ENCODE measurements at regions of chr5 and their contacts with region 1.

Region 1: GRCh38 chr5:43729846-43730478 is 127.0 kb downstream of the NNT start:
- DNase-seq: peak in 1 of 2 donors; percentile 56
- H3K4me3 ChIP-seq: no peak overlapping the region
- H3K27ac ChIP-seq: no peak overlapping the region
- H3K4me1 ChIP-seq: peaks cover 0 to 9% (median 4%) of the 10 kb centered on the region in 4 donors
- H3K27me3 ChIP-seq: no peaks in the 10 kb centered on the region
- CTCF ChIP-seq: peak in 5 of 7 experiments; percentile 26 to 61 (median 53)
- EP300 ChIP-seq: no peak
- POLR2A ChIP-seq: no peak

Region 2: DNA sequence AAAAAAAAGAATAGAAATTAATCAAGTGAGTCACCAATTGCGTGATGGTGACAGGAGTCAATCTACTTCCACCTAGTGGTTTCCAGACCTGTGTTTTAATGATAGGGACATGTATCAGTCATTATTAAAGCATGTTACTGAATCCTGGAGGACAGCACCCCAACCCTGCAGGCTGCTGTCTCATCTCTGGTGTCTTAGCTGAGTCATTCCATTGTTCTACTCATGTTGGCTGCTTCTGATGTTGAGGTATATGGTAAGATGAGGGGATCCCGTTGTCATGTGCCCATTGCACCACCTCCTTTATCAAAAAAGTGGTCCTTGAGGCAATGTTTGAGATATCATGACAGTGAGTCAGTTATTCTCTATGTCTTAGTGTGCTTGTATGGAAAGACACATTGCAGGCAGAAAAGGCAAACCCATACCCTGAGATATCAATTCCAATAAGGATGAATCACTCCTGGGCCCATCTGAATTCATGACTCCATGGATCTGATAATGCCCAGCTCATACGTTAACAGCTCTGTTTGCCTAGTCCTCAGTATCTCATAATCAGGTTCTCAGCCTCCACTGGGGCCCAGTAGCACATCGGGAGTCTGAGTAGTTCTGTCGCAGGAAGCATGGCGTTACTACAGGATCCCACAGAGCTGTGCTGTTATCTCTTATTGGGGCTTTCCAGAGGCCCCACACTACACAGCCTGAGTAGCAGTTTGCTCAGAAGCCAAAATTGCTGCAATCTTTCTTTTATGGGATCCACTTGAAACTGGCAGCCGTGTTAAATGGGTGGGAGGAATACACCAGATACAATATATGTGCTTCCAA is 447.9 kb before region 1 on chr5:
- intact Hi-C with region 1: no loop called
- DNase-seq: no peak
- H3K4me3 ChIP-seq: no peak overlapping the region
- H3K27ac ChIP-seq: no peak overlapping the region
- H3K4me1 ChIP-seq: no peaks in the 10 kb centered on the region
- H3K27me3 ChIP-seq: no peaks in the 10 kb centered on the region
- CTCF ChIP-seq: no peak
- EP300 ChIP-seq: no peak
- POLR2A ChIP-seq: no peak

Region 3: GRCh38 chr5:44332285-44332971 is 602.5 kb after region 1 on chr5:
- intact Hi-C with region 1: loop called (anchors 5 kb)
- DNase-seq: peak in 1 of 2 donors; percentile 59
- H3K4me3 ChIP-seq: no peak overlapping the region
- H3K27ac ChIP-seq: peak overlapping the region in 1 of 5 donors; percentile 15
- H3K4me1 ChIP-seq: peaks cover 0 to 8% (median 4%) of the 10 kb centered on the region in 4 donors
- H3K27me3 ChIP-seq: no peaks in the 10 kb centered on the region
- CTCF ChIP-seq: peak in 5 of 7 experiments; percentile 26 to 67 (median 52)
- EP300 ChIP-seq: no peak
- POLR2A ChIP-seq: no peak